Dendritic cell treated with granulocyte-macrophage colony-stimulating factor and Interleukin-4, amounts not matched to agents 40 ng/mL and 50 ng/mL, for 4 days (primary cell): ENCODE measurements at regions of chr7 and their contacts with region 1.

Region 1: GRCh38 chr7:91336106-91336505 is 71.9 kb downstream of the FZD1 start:
- H3K4me3 Mint-ChIP-seq: no peak overlapping the region
- H3K27ac Mint-ChIP-seq: no peak overlapping the region
- H3K4me1 Mint-ChIP-seq: peaks cover 17% of the 10 kb centered on the region
- H3K27me3 Mint-ChIP-seq: no peaks in the 10 kb centered on the region

Region 2: GRCh38 chr7:91288208-91288824 is 47.8 kb before region 1 on chr7:
- intact Hi-C with region 1: no loop called
- H3K4me3 Mint-ChIP-seq: no peak overlapping the region
- H3K27ac Mint-ChIP-seq: no peak overlapping the region
- H3K4me1 Mint-ChIP-seq: peaks cover 47% of the 10 kb centered on the region
- H3K27me3 Mint-ChIP-seq: no peaks in the 10 kb centered on the region

Region 3: GRCh38 chr7:91299952-91300775 is 35.9 kb before region 1 on chr7:
- intact Hi-C with region 1: loop called (anchors 5 kb)
- H3K4me3 Mint-ChIP-seq: no peak overlapping the region
- H3K27ac Mint-ChIP-seq: no peak overlapping the region
- H3K4me1 Mint-ChIP-seq: peaks cover 15% of the 10 kb centered on the region
- H3K27me3 Mint-ChIP-seq: no peaks in the 10 kb centered on the region

Region 4: GRCh38 chr7:91800389-91800788 is 464.3 kb after region 1 on chr7:
- intact Hi-C with region 1: no loop called
- H3K4me3 Mint-ChIP-seq: no peak overlapping the region
- H3K27ac Mint-ChIP-seq: no peak overlapping the region
- H3K4me1 Mint-ChIP-seq: no peaks in the 10 kb centered on the region
- H3K27me3 Mint-ChIP-seq: no peaks in the 10 kb centered on the region